Tibial artery (tissue), 4 donors: ENCODE measurements at regions of chr7 and their contacts with region 1.

Region 1: DNA sequence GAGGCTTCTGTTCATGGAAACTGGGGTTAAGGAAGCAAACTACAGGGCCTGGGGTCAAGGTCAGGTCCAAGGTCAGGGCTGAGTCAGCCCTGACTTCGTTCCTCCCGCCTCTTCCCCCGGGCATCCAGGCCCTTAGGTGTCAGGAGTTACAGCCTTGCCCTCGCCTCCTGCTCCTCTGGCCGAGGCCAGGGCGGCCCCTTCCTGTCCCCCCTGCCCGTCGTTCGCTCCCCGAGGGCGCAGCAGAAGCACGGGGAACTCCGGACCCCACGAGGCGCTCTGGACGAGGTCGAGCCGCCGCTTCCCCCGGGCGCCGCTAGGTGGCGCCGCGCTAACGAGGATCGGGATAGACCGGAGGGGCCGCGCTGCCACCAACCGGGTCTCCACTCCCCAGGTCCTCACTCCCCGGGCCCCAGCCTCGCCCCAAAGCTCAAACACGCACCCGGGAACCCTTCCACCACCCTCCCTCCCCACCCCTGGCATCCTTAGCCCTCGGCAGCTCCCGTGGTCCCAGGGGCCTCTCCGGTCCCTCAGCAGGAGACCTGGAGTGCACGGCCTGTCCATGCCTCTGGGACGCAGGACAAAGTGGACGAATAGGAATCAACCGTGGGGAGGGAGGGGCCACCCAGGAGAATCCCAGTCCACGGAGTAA is 59.2 kb upstream of the MYL10 start:
- DNase-seq: peak; percentile 60 to 82
- H3K4me3 ChIP-seq: peak overlapping the region in 1 of 2 donors; percentile 36
- H3K27ac ChIP-seq: no peak overlapping the region
- H3K4me1 ChIP-seq: peaks cover 0 to 11% (median 8%) of the 10 kb centered on the region in 4 donors
- H3K27me3 ChIP-seq: peaks cover 0 to 7% of the 10 kb centered on the region in 2 donors
- CTCF ChIP-seq: peak; percentile 94 to 96

Region 2: GRCh38 chr7:101542527-101543241 is 145.6 kb before region 1 on chr7:
- intact Hi-C with region 1: no loop called
- DNase-seq: peak; percentile 77 to 78
- H3K4me3 ChIP-seq: no peak overlapping the region
- H3K27ac ChIP-seq: no peak overlapping the region
- H3K4me1 ChIP-seq: peaks cover 0 to 9% (median 8%) of the 10 kb centered on the region in 4 donors
- H3K27me3 ChIP-seq: peaks cover 0 to 9% of the 10 kb centered on the region in 2 donors
- CTCF ChIP-seq: peak; percentile 90 to 93

Region 3: GRCh38 chr7:101804967-101805366 is 116.7 kb after region 1 on chr7:
- intact Hi-C with region 1: loop called (anchors 10 kb)
- DNase-seq: no peak
- H3K4me3 ChIP-seq: no peak overlapping the region
- H3K27ac ChIP-seq: no peak overlapping the region
- H3K4me1 ChIP-seq: no peaks in the 10 kb centered on the region
- H3K27me3 ChIP-seq: peaks cover 0 to 32% of the 10 kb centered on the region in 2 donors
- CTCF ChIP-seq: no peak

Region 4: GRCh38 chr7:102125127-102125561 is 436.8 kb after region 1 on chr7:
- intact Hi-C with region 1: loop called (anchors 10 kb)
- DNase-seq: peak; percentile 77 to 94
- H3K4me3 ChIP-seq: no peak overlapping the region
- H3K27ac ChIP-seq: peak overlapping the region; percentile 59 to 69
- H3K4me1 ChIP-seq: peaks cover 0 to 13% (median 2%) of the 10 kb centered on the region in 4 donors
- H3K27me3 ChIP-seq: no peaks in the 10 kb centered on the region
- CTCF ChIP-seq: peak; percentile 18 to 38

Region 5: GRCh38 chr7:102236592-102237287 is 548.4 kb after region 1 on chr7:
- intact Hi-C with region 1: loop called (anchors 5 kb)
- DNase-seq: peak; percentile 59 to 77
- H3K4me3 ChIP-seq: no peak overlapping the region
- H3K27ac ChIP-seq: no peak overlapping the region
- H3K4me1 ChIP-seq: peaks cover 0 to 5% (median 0%) of the 10 kb centered on the region in 4 donors
- H3K27me3 ChIP-seq: no peaks in the 10 kb centered on the region
- CTCF ChIP-seq: peak; percentile 75 to 78

Region 6: GRCh38 chr7:102859084-102859798 is 1170.9 kb after region 1 on chr7:
- intact Hi-C with region 1: no loop called
- DNase-seq: no peak
- H3K4me3 ChIP-seq: no peak overlapping the region
- H3K27ac ChIP-seq: peak overlapping the region; percentile 55 to 69
- H3K4me1 ChIP-seq: peaks cover 0 to 21% (median 0%) of the 10 kb centered on the region in 4 donors
- H3K27me3 ChIP-seq: no peaks in the 10 kb centered on the region
- CTCF ChIP-seq: no peak